Endothelial cell of umbilical vein (primary cell): ENCODE measurements at regions of chr16 and their contacts with region 1.

Region 1: GRCh38 chr16:82945420-82946101 is 318.8 kb downstream of the CDH13 start:
- DNase-seq: peak; percentile 69
- H3K4me3 ChIP-seq: no peak overlapping the region
- H3K27ac ChIP-seq: peak overlapping the region; percentile 80
- H3K4me1 ChIP-seq: peaks cover 30% of the 10 kb centered on the region
- H3K27me3 ChIP-seq: no peaks in the 10 kb centered on the region
- CTCF ChIP-seq: no peak
- POLR2A ChIP-seq: peak; percentile 47

Region 2: DNA sequence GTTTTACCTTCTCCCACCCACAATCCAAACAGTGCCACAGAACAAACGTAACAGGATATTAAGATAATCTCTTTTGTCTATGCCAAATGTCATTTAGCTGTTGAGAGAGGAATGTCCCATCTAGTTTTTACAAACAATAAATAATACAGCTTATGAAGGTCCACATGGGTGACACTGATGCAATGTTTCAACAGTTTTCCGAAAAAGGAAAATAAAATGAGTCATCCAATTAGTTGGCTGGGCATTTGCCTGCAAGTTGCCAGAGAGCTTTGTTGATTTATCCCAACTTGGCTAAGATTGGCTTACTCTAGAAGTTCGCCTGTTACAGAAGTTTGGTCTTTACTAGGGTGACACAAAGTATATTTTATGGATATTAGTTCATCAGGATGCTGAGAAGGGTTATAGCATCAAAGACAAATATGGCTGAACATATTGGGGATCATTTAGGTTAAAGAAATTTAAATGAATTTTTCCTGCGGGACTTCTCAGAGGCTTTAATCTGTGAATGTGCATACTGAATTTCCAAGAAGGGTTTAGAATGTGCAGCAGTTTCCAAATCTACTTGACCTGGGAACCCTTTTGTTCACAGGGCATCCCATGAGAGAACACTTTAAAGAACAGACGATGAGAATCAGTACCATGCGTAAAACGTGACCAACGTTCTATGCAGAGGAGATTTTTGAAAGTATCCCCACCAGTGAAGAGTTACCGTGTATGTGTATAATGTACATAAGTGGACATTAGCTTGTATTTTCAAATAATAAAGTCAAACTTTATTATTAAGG is 245.7 kb before region 1 on chr16:
- CTCF ChIA-PET with region 1: no interaction called
- POLR2A ChIA-PET with region 1: no interaction called
- dilution Hi-C with region 1: no loop called
- intact Hi-C with region 1: loop called (anchors 2 kb)
- DNase-seq: peak; percentile 96
- H3K4me3 ChIP-seq: no peak overlapping the region
- H3K27ac ChIP-seq: peak overlapping the region; percentile 76
- H3K4me1 ChIP-seq: peaks cover 46% of the 10 kb centered on the region
- H3K27me3 ChIP-seq: no peaks in the 10 kb centered on the region
- CTCF ChIP-seq: no peak
- POLR2A ChIP-seq: no peak

Region 3: DNA sequence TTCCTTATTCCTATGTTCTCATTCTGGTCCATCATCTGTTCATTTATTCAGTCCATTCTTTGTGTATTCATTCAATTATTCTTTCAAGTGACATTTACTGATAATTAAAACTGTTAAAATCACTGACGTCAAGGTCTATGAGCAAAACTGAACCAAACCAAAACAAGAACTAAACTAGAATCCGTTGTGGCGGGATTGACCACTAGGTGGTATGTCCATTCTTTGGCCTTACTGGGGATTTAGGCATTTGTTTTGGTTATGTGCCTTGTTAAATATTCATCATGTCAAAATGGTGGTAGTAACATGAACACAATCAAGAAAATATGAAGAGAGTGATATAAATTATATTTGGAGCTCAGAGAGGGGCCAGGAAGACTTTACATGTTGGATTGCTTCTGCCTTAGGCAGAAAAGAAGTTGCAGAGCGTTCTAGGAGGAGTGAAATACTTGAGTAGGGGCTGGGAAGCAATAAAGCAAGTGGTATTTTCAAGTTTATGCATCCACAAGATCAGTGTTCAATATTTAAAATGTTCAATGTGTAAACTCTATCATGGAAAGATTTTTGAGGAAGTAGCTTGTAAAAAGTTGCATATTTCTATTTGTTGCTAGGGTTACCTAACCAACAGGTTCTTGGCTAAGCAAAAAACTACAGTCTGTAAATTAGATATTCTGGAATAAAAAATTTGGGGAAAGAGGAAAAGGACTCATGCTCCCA is 189.8 kb before region 1 on chr16:
- CTCF ChIA-PET with region 1: interaction called, 3 read pairs
- POLR2A ChIA-PET with region 1: no interaction called
- dilution Hi-C with region 1: no loop called
- intact Hi-C with region 1: loop called (anchors 1 kb)
- DNase-seq: no peak
- H3K4me3 ChIP-seq: no peak overlapping the region
- H3K27ac ChIP-seq: peak overlapping the region; percentile 92
- H3K4me1 ChIP-seq: peaks cover 59% of the 10 kb centered on the region
- H3K27me3 ChIP-seq: no peaks in the 10 kb centered on the region
- CTCF ChIP-seq: peak in 1 of 2 donors; percentile 7
- POLR2A ChIP-seq: no peak

Region 4: DNA sequence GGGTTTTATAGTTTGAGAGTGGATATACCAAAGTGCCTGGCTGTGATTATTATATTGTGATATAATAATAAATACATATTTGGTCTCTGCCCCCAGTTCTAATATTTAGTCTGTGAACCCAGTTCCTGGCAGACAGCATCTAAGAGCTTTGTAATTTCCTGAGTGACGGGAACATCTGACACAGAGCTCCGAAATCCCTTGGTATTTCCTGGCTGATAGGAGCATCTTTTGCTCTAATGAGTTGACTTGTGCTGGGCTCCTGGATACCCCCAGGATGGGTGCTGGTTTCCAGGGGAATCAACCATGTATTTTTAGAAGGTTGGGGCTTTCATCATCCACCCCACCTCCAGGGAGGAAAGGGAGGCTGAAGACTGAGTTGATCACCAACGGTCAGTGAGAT is 131.5 kb before region 1 on chr16:
- CTCF ChIA-PET with region 1: no interaction called
- POLR2A ChIA-PET with region 1: no interaction called
- dilution Hi-C with region 1: no loop called
- intact Hi-C with region 1: loop called (anchors 1 kb)
- DNase-seq: peak; percentile 46
- H3K4me3 ChIP-seq: no peak overlapping the region
- H3K27ac ChIP-seq: peak overlapping the region; percentile 41
- H3K4me1 ChIP-seq: peaks cover 23% of the 10 kb centered on the region
- H3K27me3 ChIP-seq: no peaks in the 10 kb centered on the region
- CTCF ChIP-seq: no peak
- POLR2A ChIP-seq: no peak

Region 5: GRCh38 chr16:82979406-82980111 is 34.0 kb after region 1 on chr16:
- CTCF ChIA-PET with region 1: no interaction called
- POLR2A ChIA-PET with region 1: no interaction called
- dilution Hi-C with region 1: no loop called
- intact Hi-C with region 1: loop called (anchors 1 kb)
- DNase-seq: peak; percentile 88
- H3K4me3 ChIP-seq: no peak overlapping the region
- H3K27ac ChIP-seq: peak overlapping the region; percentile 62
- H3K4me1 ChIP-seq: peaks cover 23% of the 10 kb centered on the region
- H3K27me3 ChIP-seq: no peaks in the 10 kb centered on the region
- CTCF ChIP-seq: no peak
- POLR2A ChIP-seq: no peak

Region 6: GRCh38 chr16:82987767-82988166 is 42.2 kb after region 1 on chr16:
- CTCF ChIA-PET with region 1: no interaction called
- POLR2A ChIA-PET with region 1: no interaction called
- dilution Hi-C with region 1: loop called (anchors 5 kb)
- intact Hi-C with region 1: no loop called
- DNase-seq: no peak
- H3K4me3 ChIP-seq: no peak overlapping the region
- H3K27ac ChIP-seq: no peak overlapping the region
- H3K4me1 ChIP-seq: peaks cover 8% of the 10 kb centered on the region
- H3K27me3 ChIP-seq: no peaks in the 10 kb centered on the region
- CTCF ChIP-seq: no peak
- POLR2A ChIP-seq: no peak

Region 7: GRCh38 chr16:82995924-82996441 is 50.4 kb after region 1 on chr16:
- CTCF ChIA-PET with region 1: interaction called, 3 read pairs
- POLR2A ChIA-PET with region 1: interaction called, 4 read pairs
- dilution Hi-C with region 1: no loop called
- intact Hi-C with region 1: loop called (anchors 1 kb)
- DNase-seq: peak; percentile 96
- H3K4me3 ChIP-seq: peak overlapping the region in 1 of 3 experiments; percentile 31
- H3K27ac ChIP-seq: peak overlapping the region; percentile 91
- H3K4me1 ChIP-seq: peaks cover 23% of the 10 kb centered on the region
- H3K27me3 ChIP-seq: no peaks in the 10 kb centered on the region
- CTCF ChIP-seq: no peak
- POLR2A ChIP-seq: no peak